Endothelial cell of umbilical vein (primary cell): ENCODE measurements at regions of chr6 and their contacts with region 1.

Region 1: GRCh38 chr6:159693128-159693893 is at the start of gene SOD2:
- DNase-seq: peak; percentile 84
- H3K4me3 ChIP-seq: peak within 1 kb of the TSS; percentile 76 to 78 (median 77)
- H3K27ac ChIP-seq: peak within 1 kb of the TSS; percentile 86
- H3K4me1 ChIP-seq: peaks cover 27% of the 10 kb centered on the region
- H3K27me3 ChIP-seq: no peaks in the 10 kb centered on the region
- CTCF ChIP-seq: no peak
- POLR2A ChIP-seq: peak; percentile 84
- total RNA-seq, gene SOD2: 58.9 and 62.7 TPM in 2 replicates

Region 2: GRCh38 chr6:159590835-159591234 is 102.5 kb before region 1 on chr6:
- CTCF ChIA-PET with region 1: no interaction called
- POLR2A ChIA-PET with region 1: no interaction called
- dilution Hi-C with region 1: no loop called
- intact Hi-C with region 1: no loop called
- DNase-seq: no peak
- H3K4me3 ChIP-seq: no peak overlapping the region
- H3K27ac ChIP-seq: no peak overlapping the region
- H3K4me1 ChIP-seq: peaks cover 15% of the 10 kb centered on the region
- H3K27me3 ChIP-seq: no peaks in the 10 kb centered on the region
- CTCF ChIP-seq: no peak
- POLR2A ChIP-seq: no peak

Region 3: DNA sequence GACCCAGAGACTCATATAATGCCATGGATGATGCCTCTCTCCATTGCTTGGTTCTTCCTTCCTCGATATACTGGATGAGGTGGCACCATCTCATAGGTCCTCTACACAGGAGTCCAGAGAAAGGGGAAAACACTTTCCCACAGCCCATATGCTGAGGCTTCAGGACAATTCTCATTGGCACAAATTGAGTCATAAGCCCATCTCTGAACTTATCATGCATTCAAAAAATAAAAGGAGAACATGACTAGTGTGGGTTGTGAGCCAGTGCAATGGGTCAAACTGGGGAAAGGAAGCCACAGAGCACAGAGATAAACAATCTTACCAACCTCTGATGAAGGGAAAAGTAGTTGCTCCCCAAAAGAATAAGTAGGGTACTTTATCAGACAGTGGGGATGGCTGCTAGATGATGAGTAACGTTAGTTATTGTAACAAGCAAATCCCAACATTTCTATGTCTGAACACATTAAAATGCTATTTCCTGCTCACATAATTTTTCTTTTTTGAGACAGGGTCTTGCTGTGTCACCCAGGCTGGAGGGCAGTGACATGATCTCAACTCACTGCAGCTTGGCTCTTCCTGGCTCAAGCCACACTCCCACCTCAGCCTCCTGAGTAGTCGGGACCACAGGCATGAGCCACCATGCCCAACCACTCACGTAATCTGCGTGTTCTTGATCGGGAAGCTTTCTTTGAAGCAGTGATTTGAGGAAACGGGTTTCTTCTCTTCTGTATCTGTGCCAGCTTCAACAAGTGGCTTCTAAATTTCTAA is 27.3 kb before region 1 on chr6:
- CTCF ChIA-PET with region 1: no interaction called
- POLR2A ChIA-PET with region 1: no interaction called
- dilution Hi-C with region 1: no loop called
- intact Hi-C with region 1: no loop called
- DNase-seq: no peak
- H3K4me3 ChIP-seq: no peak overlapping the region
- H3K27ac ChIP-seq: no peak overlapping the region
- H3K4me1 ChIP-seq: no peaks in the 10 kb centered on the region
- H3K27me3 ChIP-seq: no peaks in the 10 kb centered on the region
- CTCF ChIP-seq: no peak
- POLR2A ChIP-seq: no peak

Region 4: DNA sequence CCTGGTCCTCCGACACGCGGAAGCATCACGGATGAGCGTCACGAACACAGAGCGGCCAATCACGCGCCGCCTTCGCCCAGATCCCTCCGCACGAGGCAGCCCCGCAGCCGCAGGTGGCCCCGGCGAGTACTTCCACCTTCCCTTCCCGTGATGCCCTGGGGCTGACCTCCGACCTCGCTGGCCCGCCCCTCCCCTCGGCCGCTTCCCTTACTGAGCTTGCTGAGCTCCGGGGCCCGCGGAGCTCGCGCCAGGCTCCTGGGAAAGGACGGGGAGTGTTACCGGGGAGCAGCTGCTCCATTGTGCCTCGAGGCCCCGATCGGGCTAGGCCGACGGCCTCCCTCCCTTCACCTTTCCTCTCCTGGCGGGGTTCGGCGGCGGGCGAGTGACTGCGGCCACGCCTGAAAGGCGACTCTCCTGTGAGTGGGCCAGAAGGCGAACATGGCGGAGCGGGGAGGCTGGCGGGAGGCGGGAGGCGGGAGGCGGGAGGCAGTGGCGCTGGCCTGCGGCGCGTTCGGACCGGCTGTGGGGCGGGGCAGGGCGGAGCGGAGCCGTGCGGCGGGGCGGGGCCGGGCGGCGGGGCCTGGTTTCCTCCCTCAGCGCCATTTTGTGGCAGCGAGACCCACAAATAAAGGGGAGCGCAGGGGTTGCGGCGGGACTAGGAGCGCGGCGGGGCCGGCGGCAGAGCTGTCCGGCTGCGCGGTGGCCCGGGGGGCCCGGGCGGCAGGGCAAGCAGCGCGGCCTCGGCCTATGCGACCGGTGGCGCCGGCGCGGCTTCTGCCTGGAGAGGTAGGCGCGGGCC is 33.8 kb after region 1 on chr6 and contains the start of gene WTAP:
- CTCF ChIA-PET with region 1: interaction called, 12 read pairs
- POLR2A ChIA-PET with region 1: interaction called, 18 read pairs
- dilution Hi-C with region 1: no loop called
- intact Hi-C with region 1: loop called (anchors 1 kb)
- DNase-seq: peak; percentile 95
- H3K4me3 ChIP-seq: peak within 1 kb of the TSS; percentile 83 to 100 (median 89)
- H3K27ac ChIP-seq: peak within 1 kb of the TSS; percentile 93
- H3K4me1 ChIP-seq: peaks cover 21% of the 10 kb centered on the region
- H3K27me3 ChIP-seq: no peaks in the 10 kb centered on the region
- CTCF ChIP-seq: no peak
- POLR2A ChIP-seq: peak; percentile 58
- total RNA-seq, gene WTAP: 75.6 and 81.6 TPM in 2 replicates

Region 5: DNA sequence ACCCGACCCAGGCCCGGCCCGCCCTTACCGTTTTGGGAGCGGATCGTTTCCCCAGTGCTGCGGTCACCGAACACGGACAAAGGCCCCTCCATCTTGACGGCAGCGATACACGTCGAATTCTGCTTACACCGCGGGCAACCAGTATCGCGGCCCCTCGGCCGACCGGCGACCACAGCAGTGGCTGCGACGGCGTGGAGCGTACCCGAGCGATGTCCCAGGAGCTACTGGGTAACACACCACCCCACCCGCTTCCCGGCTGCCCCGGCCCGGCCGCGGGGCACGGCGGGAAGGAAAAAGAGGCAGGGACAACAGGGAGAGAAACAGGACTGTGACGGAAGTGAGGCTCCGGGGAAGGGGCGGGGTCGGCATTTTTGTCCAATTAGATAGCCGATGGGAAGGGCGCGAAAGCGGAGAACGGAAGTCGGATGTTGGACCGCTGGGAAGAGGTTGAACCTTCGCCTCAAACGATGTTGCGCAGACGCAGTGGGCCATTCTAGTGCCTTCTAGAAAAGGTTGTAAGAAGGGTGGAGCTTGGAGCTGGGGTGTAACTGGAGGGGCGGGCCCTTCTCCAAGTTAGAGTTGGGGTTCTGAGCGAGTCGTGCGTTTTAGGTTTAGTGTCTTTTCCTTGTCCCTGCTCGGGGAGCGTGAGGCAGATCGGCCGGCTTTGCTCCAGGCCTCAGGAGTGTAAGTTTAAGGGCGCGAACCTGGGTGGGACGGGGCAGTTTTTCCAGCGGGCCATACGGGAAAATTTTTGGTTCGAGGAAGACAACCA is 96.3 kb after region 1 on chr6 and contains the start of gene TCP1:
- CTCF ChIA-PET with region 1: interaction called, 7 read pairs
- POLR2A ChIA-PET with region 1: interaction called, 9 read pairs
- dilution Hi-C with region 1: no loop called
- intact Hi-C with region 1: loop called (anchors 1 kb)
- DNase-seq: peak; percentile 100
- H3K4me3 ChIP-seq: peak within 1 kb of the TSS; percentile 63 to 95 (median 64)
- H3K27ac ChIP-seq: peak within 1 kb of the TSS; percentile 62
- H3K4me1 ChIP-seq: peaks cover 27% of the 10 kb centered on the region
- H3K27me3 ChIP-seq: no peaks in the 10 kb centered on the region
- CTCF ChIP-seq: no peak
- POLR2A ChIP-seq: peak; percentile 88
- total RNA-seq, gene TCP1: 288 and 302 TPM in 2 replicates

Region 6: DNA sequence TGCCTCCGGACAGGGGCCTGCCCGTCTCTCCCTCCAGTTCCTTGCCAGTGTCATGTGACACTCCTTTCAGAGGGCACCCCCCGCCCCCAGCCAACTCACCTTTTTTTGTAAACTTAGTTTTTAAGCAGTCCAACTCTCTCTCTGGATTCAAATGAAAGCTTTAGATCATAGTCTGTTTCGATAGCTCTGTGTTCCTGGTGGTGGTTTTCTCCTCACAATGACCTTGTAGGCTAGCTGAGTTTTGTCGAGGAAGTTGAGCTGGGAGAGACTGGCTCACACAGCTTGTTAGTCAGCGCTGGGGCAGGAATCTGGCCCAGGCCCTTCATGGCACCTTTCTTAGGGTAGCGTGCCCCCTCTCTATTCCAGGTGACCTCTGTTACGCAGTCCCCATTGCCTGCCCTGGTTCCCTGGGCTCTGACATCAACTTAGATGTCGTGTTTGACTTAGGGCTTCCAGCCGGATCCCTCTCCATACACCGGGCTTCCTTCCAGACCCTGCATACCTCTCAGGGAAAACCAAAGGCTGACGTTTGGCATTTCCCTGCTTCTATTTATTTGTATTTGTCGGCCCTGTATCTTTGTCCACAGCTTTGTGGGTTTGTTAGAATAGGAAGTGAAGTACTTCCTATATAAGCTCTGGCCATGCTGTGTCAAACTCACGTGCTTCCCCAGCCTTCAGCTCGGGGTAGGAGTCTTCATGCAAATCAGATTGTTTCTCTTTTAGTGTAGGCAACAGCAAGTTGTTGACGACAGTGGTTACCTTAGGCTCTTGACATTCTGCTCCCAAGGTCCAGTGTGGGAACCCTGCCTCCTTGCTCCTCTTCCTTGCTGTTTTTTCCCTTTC is 288.3 kb after region 1 on chr6:
- CTCF ChIA-PET with region 1: no interaction called
- POLR2A ChIA-PET with region 1: no interaction called
- dilution Hi-C with region 1: no loop called
- intact Hi-C with region 1: loop called (anchors 5 kb)
- DNase-seq: peak; percentile 97
- H3K4me3 ChIP-seq: no peak overlapping the region
- H3K27ac ChIP-seq: peak overlapping the region; percentile 40
- H3K4me1 ChIP-seq: peaks cover 30% of the 10 kb centered on the region
- H3K27me3 ChIP-seq: peaks cover 14 to 17% of the 10 kb centered on the region in 2 experiments
- CTCF ChIP-seq: no peak
- POLR2A ChIP-seq: no peak

Region 7: DNA sequence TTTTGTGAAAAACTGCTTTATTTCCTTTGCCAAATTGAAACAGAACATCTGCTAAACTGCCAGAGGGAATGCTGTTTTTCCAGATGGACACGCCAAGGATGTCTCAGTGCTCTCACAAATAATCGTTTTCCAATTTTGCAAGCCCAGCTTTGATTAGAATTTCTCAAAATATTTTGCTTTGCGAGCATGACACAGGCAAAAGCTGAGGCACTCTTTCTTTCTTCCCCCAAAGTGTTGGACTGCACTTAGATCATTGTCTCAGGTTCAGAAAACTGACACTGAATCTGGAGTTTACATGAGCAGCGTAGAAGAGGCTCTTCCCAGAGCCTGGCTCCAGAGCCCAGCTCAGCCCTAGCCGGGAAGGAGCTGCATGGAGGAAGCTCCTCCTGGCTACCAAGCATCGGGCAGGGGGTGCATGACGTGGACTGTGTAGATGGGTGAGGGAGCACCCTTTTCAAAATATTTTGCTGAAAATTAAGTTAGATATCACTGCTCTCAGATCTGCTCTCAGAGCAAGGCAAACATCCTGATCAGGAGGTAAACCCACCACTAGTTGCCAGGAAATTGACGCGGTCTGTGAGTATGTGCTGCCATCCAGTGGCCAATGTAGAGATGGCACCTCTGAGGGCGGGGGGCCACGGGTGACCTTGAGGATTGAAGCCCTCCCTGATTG is 762.4 kb after region 1 on chr6:
- CTCF ChIA-PET with region 1: no interaction called
- POLR2A ChIA-PET with region 1: no interaction called
- dilution Hi-C with region 1: no loop called
- intact Hi-C with region 1: loop called (anchors 5 kb)
- DNase-seq: peak; percentile 43
- H3K4me3 ChIP-seq: no peak overlapping the region
- H3K27ac ChIP-seq: no peak overlapping the region
- H3K4me1 ChIP-seq: no peaks in the 10 kb centered on the region
- H3K27me3 ChIP-seq: no peaks in the 10 kb centered on the region
- CTCF ChIP-seq: peak; percentile 77 to 80
- POLR2A ChIP-seq: no peak